Esophagus muscularis mucosa (tissue), 4 donors: ENCODE measurements at regions of chr18 and their contacts with region 1.

Region 1: DNA sequence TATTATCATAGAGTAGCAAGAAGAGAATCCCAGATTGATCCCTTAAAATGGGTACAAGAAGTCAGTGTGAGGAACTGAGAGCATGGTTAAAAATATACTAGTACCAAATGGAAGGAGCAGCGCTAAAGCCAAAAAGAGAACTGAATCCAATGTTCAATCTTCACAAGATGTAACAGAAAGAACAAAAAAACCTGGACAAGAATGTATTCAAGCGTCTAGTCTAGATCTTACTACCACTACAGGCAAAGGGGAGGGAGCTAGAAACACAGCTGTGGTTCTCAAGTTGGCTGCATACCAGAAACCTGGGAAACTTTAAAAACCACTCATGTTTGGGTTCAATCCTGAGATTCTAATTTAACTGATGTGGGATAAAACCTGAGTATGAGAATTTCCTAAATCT is 57.5 kb downstream of the PIAS2 start:
- DNase-seq: no peak
- H3K4me3 ChIP-seq: no peak overlapping the region
- H3K27ac ChIP-seq: no peak overlapping the region
- H3K4me1 ChIP-seq: no peaks in the 10 kb centered on the region
- H3K27me3 ChIP-seq: no peaks in the 10 kb centered on the region
- CTCF ChIP-seq: no peak
- EP300 ChIP-seq: no peak
- POLR2A ChIP-seq: no peak

Region 2: GRCh38 chr18:46793565-46793964 is 66.3 kb before region 1 on chr18:
- intact Hi-C with region 1: loop called (anchors 10 kb)
- DNase-seq: no peak
- H3K4me3 ChIP-seq: no peak overlapping the region
- H3K27ac ChIP-seq: no peak overlapping the region
- H3K4me1 ChIP-seq: no peaks in the 10 kb centered on the region
- H3K27me3 ChIP-seq: no peaks in the 10 kb centered on the region
- CTCF ChIP-seq: no peak
- EP300 ChIP-seq: no peak
- POLR2A ChIP-seq: no peak